ENCODE measurements at regions of chr4 and their contacts with region 1.

Region 1: GRCh38 chr4:154559494-154560418 is 3.1 kb upstream of the FGB start:
- DNase-seq: peak; percentile 34
- CTCF ChIP-seq: peak; percentile 61

Region 2: GRCh38 chr4:154137320-154137905 is 422.3 kb before region 1 on chr4:
- CTCF ChIA-PET with region 1: no interaction called
- POLR2A ChIA-PET with region 1: no interaction called
- DNase-seq: no peak
- CTCF ChIP-seq: no peak

Region 3: GRCh38 chr4:154574311-154574710 is 14.6 kb after region 1 on chr4:
- CTCF ChIA-PET with region 1: interaction called, 22 read pairs
- POLR2A ChIA-PET with region 1: no interaction called
- DNase-seq: no peak
- CTCF ChIP-seq: no peak

Region 4: GRCh38 chr4:154586296-154587033 is 26.7 kb after region 1 on chr4:
- CTCF ChIA-PET with region 1: interaction called, 12 read pairs
- POLR2A ChIA-PET with region 1: no interaction called
- DNase-seq: no peak
- CTCF ChIP-seq: no peak

Region 5: DNA sequence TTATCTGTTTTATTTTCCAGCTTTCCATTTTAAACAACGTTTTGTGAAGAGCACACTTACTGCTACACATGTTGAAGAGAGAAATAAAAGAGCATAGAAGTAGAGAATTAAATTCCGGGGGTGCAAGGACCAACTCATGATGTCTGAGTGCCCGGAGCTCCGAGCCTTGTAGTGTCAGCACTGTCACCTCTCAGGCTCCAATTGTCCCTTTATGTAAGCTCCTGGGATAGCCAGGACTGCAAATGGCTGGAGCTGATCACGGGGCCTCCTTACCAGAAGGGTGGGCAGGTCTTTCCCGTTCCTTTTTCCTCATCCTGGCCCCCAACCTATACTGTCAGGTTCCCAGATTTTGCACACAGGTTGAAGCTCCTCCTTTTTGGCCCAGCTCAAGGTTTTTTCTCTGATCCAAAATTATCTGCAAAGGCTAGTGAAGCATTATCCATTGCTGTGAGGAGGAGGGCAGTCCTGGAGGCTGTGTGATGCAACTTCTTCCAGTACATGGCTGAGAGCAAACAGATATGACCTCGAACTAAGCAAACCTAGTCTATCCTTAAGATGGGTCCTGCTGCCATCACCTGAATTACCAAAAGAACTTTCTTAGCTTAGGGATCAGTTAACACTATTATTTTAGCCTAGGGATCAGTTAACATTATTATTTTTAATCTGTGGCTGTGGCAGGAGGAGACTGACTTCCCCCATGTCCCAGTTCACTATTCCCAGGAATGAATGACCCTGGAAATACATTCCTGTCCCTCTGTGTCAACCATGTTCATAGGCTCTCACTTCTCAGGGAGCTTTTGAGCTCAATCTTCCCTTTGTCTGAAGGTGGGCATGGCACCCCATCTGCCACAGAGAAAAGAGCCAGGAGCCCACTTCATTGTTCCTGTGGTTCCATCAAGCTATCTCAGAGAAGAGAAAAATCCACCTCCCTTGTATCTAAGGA is 53.0 kb after region 1 on chr4 and contains the start of gene FGG:
- CTCF ChIA-PET with region 1: interaction called, 550 read pairs
- POLR2A ChIA-PET with region 1: no interaction called
- DNase-seq: no peak
- CTCF ChIP-seq: no peak

Region 6: DNA sequence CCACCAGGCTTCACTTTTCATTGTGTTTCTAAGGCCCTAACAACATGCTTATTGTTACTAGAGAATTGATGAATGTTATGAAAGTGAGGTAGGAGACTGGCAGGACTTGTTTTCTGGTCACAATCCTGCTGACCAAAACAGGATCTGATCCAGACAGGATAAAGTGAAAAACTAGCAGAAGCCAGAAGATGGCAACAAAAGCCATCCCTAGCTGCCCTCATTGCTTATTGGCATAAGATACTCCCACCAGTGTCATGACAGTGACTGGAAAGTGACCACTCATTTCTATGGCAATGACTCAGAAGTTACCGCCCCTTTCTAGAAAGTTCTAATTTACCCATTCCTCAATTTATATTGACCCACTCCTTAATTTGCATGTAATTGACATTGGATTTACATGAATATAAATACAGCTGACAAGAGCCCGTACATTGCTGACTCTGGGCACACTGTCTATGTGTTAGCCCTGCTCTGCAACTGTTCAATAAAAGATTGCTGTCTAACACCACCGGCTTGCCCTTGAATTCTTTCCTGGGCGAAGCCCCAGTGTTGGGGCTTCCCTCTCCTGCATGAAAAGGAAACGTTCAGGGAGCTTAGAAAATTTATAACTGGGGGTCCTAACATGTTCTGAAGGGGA is 82.7 kb after region 1 on chr4:
- CTCF ChIA-PET with region 1: interaction called, 13 read pairs
- POLR2A ChIA-PET with region 1: no interaction called
- DNase-seq: no peak
- CTCF ChIP-seq: no peak

Measured in GM10248 (cell line).